HEK293 (cell line): ENCODE measurements at regions of chr2 and their contacts with region 1.

Region 1: DNA sequence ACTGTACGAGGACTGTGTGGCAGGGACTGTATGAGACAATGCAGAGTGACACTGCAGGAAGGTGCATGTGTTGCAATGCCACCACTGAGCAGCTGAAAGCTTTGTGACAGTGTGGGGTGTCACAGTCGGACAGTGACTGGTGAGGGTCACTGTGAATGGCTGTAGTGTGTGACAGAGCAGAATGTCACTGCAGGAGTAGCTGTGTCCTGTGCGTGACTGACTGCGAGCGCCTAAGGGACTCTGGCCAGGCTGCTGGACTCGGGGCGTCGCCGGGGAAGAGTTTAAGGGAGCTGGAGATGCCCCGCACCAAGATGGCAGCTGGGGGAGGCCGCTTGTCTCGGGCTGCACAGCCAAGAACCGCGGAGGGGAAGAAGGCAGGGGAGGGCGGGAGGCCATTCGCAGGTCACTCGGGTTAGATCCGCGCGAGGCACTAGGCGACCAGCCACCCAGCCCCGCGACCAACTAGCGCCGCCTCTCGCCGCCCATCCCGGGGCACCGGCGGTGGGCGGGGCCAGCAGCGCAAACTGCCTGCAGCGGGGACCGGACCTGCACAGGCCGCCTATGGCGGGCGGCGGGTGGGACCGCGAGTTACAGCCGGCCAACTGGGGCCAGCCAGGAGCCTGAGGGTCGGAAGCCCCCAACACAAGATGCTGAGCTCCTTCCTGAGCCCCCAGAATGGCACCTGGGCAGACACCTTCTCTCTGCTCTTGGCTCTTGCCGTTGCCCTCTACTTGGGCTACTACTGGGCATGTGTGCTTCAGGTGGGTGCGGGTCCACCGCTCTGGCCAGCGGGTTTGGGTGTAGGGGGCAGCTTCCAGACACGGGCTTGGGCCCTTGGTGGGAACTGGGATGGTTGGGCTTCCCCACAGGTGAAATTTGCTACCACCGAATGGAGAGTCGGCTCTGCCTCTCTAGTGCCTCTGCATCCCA is at the start of gene ABHD1:
- H3K4me3 ChIP-seq: peak within 1 kb of the TSS; percentile 48
- H3K27ac ChIP-seq: no peak within 1 kb of the TSS; the same call in 1 of the 2 replicates
- H3K4me1 ChIP-seq: 0 out of 2 replicates have a peak, but pooled peaks cover 3% of the 10 kb centered on the region
- CTCF ChIP-seq: peak; percentile 52; the same call in 1 of the 2 replicates

Region 2: DNA sequence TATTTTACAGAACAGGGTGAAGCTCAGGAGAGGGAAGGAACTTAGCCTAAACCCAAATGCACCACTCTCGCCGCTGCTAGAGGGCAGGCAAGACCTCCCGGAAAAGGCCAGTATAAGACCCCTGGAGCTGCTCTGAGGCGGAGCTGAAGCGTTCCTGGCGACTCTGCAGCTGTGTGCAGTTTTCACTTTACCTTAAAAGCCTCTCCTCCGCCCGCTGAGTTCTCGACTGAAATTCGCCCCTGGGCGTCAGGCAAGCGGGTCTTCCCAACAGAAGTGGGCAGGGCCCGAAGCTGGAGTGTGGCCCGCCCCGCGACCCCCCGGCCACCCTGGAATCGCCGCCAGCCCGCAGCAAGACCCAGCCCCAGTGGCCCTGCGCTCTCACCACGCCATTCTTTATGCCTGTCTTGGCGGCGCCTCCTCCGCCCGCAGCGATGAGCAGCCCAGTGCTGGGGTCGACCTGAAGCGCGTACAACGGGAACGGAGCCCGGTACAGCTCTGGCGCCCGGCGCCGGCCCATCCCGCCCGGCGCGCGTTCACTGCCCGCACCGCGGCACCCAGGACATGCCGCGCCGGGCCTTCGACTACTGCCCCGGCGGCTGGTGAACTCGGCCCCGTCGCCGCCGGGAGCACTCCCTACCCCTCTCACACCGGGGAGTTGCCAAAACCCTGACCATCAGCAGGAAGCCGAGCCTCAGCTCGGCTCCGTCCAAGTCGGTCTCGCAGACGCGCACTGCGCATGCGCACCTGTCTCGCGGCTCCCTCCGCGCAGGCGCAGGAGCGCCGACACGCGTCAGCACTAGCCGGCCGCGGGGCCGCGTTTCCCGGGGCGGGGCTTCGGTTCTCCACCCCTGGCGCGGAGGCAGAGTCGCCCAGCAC is 10.6 kb after region 1 on chr2 and contains the start of gene PREB:
- CTCF ChIA-PET with region 1: interaction called, 17 read pairs
- POLR2A ChIA-PET with region 1: interaction called, 34 read pairs
- H3K4me3 ChIP-seq: peak within 1 kb of the TSS; percentile 87
- H3K27ac ChIP-seq: peak within 1 kb of the TSS; percentile 72; the same call in 1 of the 2 replicates
- H3K4me1 ChIP-seq: no peaks in the 10 kb centered on the region
- CTCF ChIP-seq: 0 out of 2 replicates have a peak, but pooled peaks have one; percentile 29

Region 3: GRCh38 chr2:27291865-27292264 is 168.3 kb after region 1 on chr2:
- CTCF ChIA-PET with region 1: no interaction called
- POLR2A ChIA-PET with region 1: no interaction called
- H3K4me3 ChIP-seq: no peak overlapping the region
- H3K27ac ChIP-seq: no peak overlapping the region
- H3K4me1 ChIP-seq: peaks cover 13% of the 10 kb centered on the region
- CTCF ChIP-seq: no peak